PC-9 (cell line): ENCODE measurements at regions of chr13 and their contacts with region 1.

Region 1: DNA sequence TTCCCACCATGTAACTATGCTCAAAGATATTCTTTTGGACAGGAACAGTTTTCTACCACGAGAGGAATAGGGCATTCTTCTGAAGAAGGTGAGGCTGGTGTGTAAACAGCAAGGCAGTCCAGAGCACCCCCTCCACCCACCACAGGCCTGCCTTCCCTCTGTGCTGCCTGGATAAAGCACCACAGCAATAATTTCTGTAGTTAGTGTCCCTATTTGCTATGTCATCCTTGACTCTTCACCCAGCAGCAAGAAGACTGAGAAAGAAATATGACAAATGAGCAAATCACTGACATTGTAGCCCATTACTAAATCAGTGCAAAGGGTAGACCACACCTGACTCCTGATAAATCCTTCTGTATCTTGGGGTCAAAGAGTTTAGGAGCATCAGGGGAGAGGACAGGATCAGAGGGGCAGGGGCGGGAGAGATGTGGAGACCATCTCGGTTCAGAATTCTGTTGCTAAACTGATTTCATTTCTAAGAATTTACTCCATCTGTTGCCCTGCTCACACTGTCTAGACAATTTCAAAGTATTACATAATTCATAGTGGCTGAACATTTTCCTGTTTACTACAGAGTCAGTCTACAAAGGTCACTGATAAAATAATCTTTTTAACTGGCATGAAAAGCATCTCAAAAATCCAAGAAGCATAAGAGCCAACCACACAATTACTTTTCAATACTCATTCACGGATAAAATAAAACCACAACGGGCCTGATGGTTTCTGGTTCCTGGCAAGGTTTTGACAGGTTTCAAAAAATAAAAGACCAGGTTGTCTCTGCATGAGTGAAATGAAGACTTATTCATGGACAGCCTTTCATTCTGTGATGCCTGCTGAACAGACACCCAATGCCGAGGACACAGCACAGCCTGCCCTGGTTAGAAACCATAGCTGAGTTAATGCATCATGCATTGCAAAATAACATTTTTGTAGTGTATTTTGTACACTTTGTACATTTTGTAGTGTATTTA is 88.4 kb upstream of the IRS2 start:
- DNase-seq: peak; percentile 32 to 90
- H3K4me3 ChIP-seq: peak overlapping the region; percentile 4; the same call in 1 of the 2 replicates
- H3K27ac ChIP-seq: peak overlapping the region; percentile 84
- H3K4me1 ChIP-seq: peaks cover 76% of the 10 kb centered on the region
- H3K27me3 ChIP-seq: no peaks in the 10 kb centered on the region
- CTCF ChIP-seq: no peak

Region 2: DNA sequence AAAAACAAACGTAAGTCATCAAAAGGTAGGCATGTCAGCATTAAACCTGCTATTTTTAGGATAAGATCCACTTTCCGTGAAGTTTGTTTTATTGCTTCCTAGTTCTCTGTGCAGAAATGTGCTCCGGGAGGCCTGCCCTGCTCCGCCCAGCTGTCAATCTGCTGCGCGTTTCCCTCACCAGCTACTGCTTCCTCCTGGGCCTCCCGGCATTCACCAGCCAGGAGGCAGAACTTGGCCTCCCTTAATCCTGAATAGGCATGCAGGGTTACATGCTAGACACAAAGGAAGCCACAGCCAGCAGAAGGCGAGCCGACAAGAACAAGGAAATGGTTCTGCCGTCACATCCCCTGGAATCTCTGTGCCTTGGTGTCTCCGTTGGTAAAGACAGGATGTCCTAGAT is 474.6 kb before region 1 on chr13:
- CTCF ChIA-PET with region 1: interaction called, 11 read pairs
- POLR2A ChIA-PET with region 1: no interaction called
- intact Hi-C with region 1: no loop called
- DNase-seq: no peak
- H3K4me3 ChIP-seq: no peak overlapping the region
- H3K27ac ChIP-seq: no peak overlapping the region
- H3K4me1 ChIP-seq: no peaks in the 10 kb centered on the region
- H3K27me3 ChIP-seq: no peaks in the 10 kb centered on the region
- CTCF ChIP-seq: no peak

Region 3: DNA sequence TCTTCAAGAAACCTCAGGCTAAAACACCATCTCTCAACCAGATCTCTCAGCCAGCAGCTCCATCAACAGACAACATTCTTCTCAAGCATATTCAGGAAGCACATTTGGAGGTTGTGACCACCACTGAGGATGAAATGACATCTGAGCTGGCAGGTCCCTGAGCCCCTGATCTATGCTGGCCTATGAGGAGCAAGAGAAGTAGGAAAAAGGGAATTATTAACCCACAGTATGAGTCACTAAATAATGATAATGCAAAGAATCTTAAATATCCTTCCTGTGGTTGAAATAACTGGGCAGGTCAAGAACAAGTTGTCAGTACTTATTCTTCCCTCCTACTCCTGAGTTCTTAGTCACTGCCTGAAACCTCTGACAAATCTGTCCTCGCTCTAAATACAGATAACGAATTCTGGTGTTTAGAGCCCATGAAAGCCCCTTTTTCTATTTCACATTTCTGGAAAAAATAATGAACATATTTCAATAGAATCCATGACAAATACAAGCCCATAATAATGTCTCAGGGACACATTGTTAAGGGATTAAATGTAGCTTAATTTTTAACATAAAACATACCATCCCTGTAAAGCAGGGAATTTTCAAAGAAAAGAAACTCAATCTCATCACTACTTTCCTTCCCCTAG is 137.5 kb after region 1 on chr13:
- CTCF ChIA-PET with region 1: no interaction called
- POLR2A ChIA-PET with region 1: no interaction called
- intact Hi-C with region 1: loop called (anchors 1 kb)
- DNase-seq: peak; percentile 77 to 99
- H3K4me3 ChIP-seq: 0 out of 2 replicates have a peak overlapping the region, but pooled peaks have one; percentile 4
- H3K27ac ChIP-seq: peak overlapping the region; percentile 91
- H3K4me1 ChIP-seq: peaks cover 49% of the 10 kb centered on the region
- H3K27me3 ChIP-seq: no peaks in the 10 kb centered on the region
- CTCF ChIP-seq: no peak